Common myeloid progenitor, CD34-positive (primary cell): ENCODE measurements at regions of chr2 and their contacts with region 1.

Region 1: DNA sequence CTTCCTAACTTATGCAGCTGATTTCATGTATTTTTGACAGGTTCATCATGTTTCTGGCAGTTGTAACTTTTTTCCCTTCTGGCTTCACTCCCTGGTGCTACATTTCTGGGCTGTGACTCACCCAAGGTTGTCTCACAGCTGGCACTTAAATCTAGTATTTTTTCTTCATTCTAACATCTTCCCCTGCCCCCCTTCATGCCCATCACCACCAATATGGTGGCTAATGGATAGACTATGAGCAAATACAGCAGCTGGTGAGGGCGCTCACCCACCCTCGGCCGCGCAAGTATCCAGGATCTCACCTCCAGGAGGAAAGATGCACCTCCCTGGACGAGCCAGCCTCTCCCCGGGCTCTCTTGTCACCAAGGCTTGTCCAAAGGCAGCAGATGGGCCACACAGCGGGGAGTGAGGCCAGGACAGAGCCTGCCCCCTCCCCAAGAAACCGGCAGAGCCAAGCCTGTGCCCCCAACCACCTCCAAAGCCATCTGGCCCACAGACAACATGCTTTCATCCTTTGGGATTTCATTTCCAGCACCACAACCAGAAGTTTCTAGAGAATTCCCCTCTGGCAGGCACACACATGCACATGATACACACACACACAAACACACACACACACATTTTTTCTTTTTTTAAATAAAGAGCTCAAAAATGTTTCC is 39.1 kb downstream of the ATOH8 start:
- DNase-seq: peak in 1 of 3 donors; percentile 18
- H3K4me3 ChIP-seq: no peak overlapping the region
- H3K27ac ChIP-seq: no peak overlapping the region
- H3K4me1 ChIP-seq: peaks cover 0 to 17% (median 10%) of the 10 kb centered on the region in 4 experiments
- H3K27me3 ChIP-seq: peaks cover 0 to 4% (median 0%) of the 10 kb centered on the region in 5 experiments

Region 2: GRCh38 chr2:85772019-85772745 is 20.7 kb before region 1 on chr2:
- CTCF ChIA-PET with region 1: interaction called, 19 read pairs
- POLR2A ChIA-PET with region 1: no interaction called
- DNase-seq: peak; percentile 70 to 84 (median 79)
- H3K4me3 ChIP-seq: peak overlapping the region in 2 of 7 experiments; percentile 40 to 45
- H3K27ac ChIP-seq: no peak overlapping the region
- H3K4me1 ChIP-seq: peaks cover 0 to 16% (median 9%) of the 10 kb centered on the region in 4 experiments
- H3K27me3 ChIP-seq: peaks cover 0 to 9% (median 1%) of the 10 kb centered on the region in 5 experiments

Region 3: DNA sequence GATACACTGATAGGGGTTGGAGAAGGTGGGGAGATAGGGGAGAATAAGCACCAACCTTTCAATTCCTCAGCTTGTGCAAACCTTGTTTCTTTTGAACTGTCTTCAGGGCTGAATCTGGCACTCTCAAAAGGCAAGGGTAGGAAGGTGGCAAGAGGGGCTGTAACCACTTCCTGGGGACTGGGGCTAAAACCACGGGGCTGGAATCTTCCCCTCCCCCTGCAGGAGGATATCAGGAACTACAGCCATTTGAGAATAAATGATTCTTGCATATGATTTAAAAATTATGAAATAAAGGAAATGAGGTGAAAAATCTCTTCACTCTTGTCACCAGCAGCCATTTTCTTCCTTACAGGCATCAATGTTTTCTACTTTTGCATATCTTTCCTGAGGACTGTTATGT is 11.7 kb after region 1 on chr2:
- CTCF ChIA-PET with region 1: interaction called, 12 read pairs
- POLR2A ChIA-PET with region 1: no interaction called
- DNase-seq: peak; percentile 34 to 76 (median 76)
- H3K4me3 ChIP-seq: no peak overlapping the region
- H3K27ac ChIP-seq: no peak overlapping the region
- H3K4me1 ChIP-seq: peaks cover 0 to 9% (median 6%) of the 10 kb centered on the region in 4 experiments
- H3K27me3 ChIP-seq: no peaks in the 10 kb centered on the region

Region 4: DNA sequence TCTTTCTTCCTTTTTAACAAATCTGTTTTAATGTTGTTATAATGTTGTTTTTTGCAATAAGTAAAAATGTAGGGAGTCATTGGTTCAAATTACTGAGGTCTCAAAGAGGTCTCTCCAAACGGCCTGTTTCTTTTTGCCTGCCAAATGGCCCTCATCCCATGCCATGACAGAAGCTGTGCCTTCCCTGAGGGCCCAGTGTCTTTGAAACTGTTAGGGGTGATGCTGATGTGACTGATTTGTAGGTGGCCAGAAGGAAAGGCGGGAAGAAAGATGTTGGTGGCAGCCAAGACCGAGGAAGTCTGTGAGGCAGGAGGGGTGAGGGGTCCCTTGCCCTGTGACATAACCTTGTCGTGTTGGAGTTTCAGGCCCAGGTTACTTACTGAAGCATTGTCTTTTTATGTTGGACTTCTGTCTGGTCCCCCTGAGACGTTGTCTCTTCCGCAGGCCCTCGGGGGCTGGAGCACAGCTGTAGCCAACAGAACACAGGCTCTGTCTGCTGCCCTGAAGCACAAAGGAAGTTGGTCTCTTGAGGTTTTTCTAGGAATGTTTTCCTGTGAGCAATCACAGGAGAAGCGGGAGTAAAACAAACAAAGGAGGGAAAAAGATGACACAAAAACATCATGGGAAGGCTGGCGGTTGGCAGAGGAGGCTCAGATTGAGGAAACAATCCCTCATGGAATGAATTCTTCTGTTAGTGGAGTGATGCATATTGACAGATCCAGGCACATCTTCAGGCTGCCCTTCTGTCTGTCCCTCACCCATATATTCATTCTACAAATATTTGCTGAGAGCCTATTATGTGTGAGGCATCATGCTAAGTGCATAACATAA is 100.7 kb after region 1 on chr2:
- CTCF ChIA-PET with region 1: no interaction called
- POLR2A ChIA-PET with region 1: no interaction called
- DNase-seq: no peak
- H3K4me3 ChIP-seq: no peak overlapping the region
- H3K27ac ChIP-seq: no peak overlapping the region
- H3K4me1 ChIP-seq: peaks cover 4 to 30% (median 23%) of the 10 kb centered on the region in 4 experiments
- H3K27me3 ChIP-seq: peaks cover 0 to 1% (median 0%) of the 10 kb centered on the region in 5 experiments